ENCODE measurements at regions of chr11 and their contacts with region 1.

Region 1: GRCh38 chr11:5364214-5364613 is 12.9 kb downstream of the OR51B6 start:
- DNase-seq: peak; percentile 96
- ATAC-seq: peak; percentile 72
- H3K4me3 ChIP-seq: no peak overlapping the region
- H3K27ac ChIP-seq: peak overlapping the region; percentile 100
- H3K4me1 ChIP-seq: peaks cover 26% of the 10 kb centered on the region
- H3K27me3 ChIP-seq: no peaks in the 10 kb centered on the region
- CTCF ChIP-seq: no peak
- POLR2A ChIP-seq: no peak; the same call in 1 of the 2 replicates
- RAD21 ChIP-seq: no peak

Region 2: GRCh38 chr11:5343474-5344335 is 20.5 kb before region 1 on chr11 and contains the start of gene OR51B5:
- CTCF ChIA-PET with region 1: interaction called, 3 read pairs
- POLR2A ChIA-PET with region 1: interaction called, 5 read pairs
- dilution Hi-C with region 1: no loop called
- in situ Hi-C with region 1: no loop called
- intact Hi-C with region 1: loop called (anchors 1 kb)
- DNase-seq: peak; percentile 92
- ATAC-seq: peak; percentile 81
- H3K4me3 ChIP-seq: no peak within 1 kb of the TSS
- H3K27ac ChIP-seq: peak within 1 kb of the TSS; percentile 100
- H3K4me1 ChIP-seq: peaks cover 18% of the 10 kb centered on the region
- H3K27me3 ChIP-seq: no peaks in the 10 kb centered on the region
- CTCF ChIP-seq: no peak
- POLR2A ChIP-seq: no peak
- RAD21 ChIP-seq: no peak
- total RNA-seq, gene OR51B5: 0.54 and 0.56 TPM in 2 replicates

Region 3: GRCh38 chr11:5420993-5421392 is 56.8 kb after region 1 on chr11:
- CTCF ChIA-PET with region 1: no interaction called
- POLR2A ChIA-PET with region 1: no interaction called
- dilution Hi-C with region 1: no loop called
- in situ Hi-C with region 1: no loop called
- intact Hi-C with region 1: no loop called
- DNase-seq: no peak
- ATAC-seq: no peak
- H3K4me3 ChIP-seq: no peak overlapping the region
- H3K27ac ChIP-seq: no peak overlapping the region
- H3K4me1 ChIP-seq: no peaks in the 10 kb centered on the region
- H3K27me3 ChIP-seq: no peaks in the 10 kb centered on the region
- CTCF ChIP-seq: no peak
- POLR2A ChIP-seq: no peak
- RAD21 ChIP-seq: no peak

Region 4: DNA sequence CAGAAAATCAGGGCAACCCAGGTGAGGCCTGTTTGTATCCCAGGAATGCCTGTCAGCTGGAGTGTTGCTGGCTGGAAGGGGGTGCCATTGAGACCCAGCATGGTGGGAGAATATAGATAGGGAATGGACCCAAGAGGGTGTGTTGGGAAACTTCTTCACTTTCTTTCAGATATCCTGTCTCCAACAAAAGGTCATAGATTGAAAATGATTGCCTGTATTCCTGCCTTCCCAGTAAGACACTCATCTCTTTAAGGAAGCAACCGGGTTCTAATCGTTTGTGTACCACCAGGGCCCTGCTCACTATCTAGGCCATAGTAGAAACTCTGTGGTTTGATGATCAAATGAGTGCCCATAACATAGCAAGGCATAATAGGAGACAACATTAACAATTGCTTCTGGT is 77.2 kb after region 1 on chr11 and contains the start of gene OR51I1:
- CTCF ChIA-PET with region 1: no interaction called
- POLR2A ChIA-PET with region 1: no interaction called
- dilution Hi-C with region 1: no loop called
- in situ Hi-C with region 1: no loop called
- intact Hi-C with region 1: no loop called
- DNase-seq: no peak
- ATAC-seq: no peak
- H3K4me3 ChIP-seq: no peak within 1 kb of the TSS
- H3K27ac ChIP-seq: no peak within 1 kb of the TSS
- H3K4me1 ChIP-seq: no peaks in the 10 kb centered on the region
- H3K27me3 ChIP-seq: no peaks in the 10 kb centered on the region
- CTCF ChIP-seq: no peak
- POLR2A ChIP-seq: no peak
- RAD21 ChIP-seq: no peak
- total RNA-seq, gene OR51I1: not detected in 2 replicates